ENCODE measurements at regions of chr12 and their contacts with region 1.

Region 1: GRCh38 chr12:62655666-62656151 is 189.1 kb downstream of the MON2 start:
- DNase-seq: no peak
- H3K4me3 ChIP-seq: no peak overlapping the region; a peak in 1 of 8 replicates
- H3K27ac ChIP-seq: no peak overlapping the region
- H3K4me1 ChIP-seq: peaks cover 37 to 59% (median 49%) of the 10 kb centered on the region in 4 experiments
- H3K27me3 ChIP-seq: peaks cover 5 to 22% (median 14%) of the 10 kb centered on the region in 4 experiments
- CTCF ChIP-seq: no peak
- EP300 ChIP-seq: no peak
- POLR2A ChIP-seq: no peak
- RAD21 ChIP-seq: peak in 1 of 2 experiments; percentile 5; a peak in 1 of 4 replicates

Region 2: DNA sequence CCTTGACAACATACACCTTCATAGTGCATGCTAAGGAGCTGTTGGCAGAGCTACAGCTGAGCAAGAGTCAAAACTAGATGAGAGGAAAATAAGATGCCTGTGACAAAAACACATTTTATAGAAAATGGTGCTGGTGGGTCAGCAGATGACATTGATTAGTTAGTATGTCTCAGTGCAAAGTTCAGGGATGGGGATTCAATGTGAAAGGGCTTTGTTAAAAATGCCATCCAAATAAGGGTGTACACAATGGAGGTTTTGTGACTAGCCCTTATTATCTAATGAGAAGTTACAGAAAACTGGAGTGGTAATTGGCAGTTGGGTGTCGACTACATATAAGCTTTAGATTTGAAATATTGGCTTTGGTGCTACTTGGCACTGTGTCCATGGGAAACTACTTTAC is 20.1 kb before region 1 on chr12:
- CTCF ChIA-PET with region 1: interaction called, 13 read pairs
- POLR2A ChIA-PET with region 1: interaction called, 4 read pairs
- DNase-seq: no peak
- H3K4me3 ChIP-seq: no peak overlapping the region
- H3K27ac ChIP-seq: no peak overlapping the region
- H3K4me1 ChIP-seq: peaks cover 2 to 15% (median 10%) of the 10 kb centered on the region in 4 experiments
- H3K27me3 ChIP-seq: peaks cover 2 to 35% (median 27%) of the 10 kb centered on the region in 4 experiments
- CTCF ChIP-seq: no peak
- EP300 ChIP-seq: no peak
- POLR2A ChIP-seq: no peak
- RAD21 ChIP-seq: no peak